SK-N-SH (cell line): ENCODE measurements at regions of chr5 and their contacts with region 1.

Region 1: GRCh38 chr5:147188200-147189108 is 46.4 kb upstream of the STK32A start:
- DNase-seq: peak; percentile 46
- H3K4me3 ChIP-seq: peak overlapping the region in 1 of 2 experiments; percentile 44; a peak in 2 of 4 replicates
- H3K27ac ChIP-seq: no peak overlapping the region
- H3K4me1 ChIP-seq: peaks cover 4 to 7% of the 10 kb centered on the region in 2 experiments; a peak in 2 of 4 replicates
- H3K27me3 ChIP-seq: no peaks in the 10 kb centered on the region
- CTCF ChIP-seq: peak; percentile 90
- EP300 ChIP-seq: 0 out of 4 replicates have a peak, but pooled peaks of 1 of the 2 experiments have one; percentile 7
- RAD21 ChIP-seq: peak; percentile 93

Region 2: GRCh38 chr5:146533260-146533857 is 655.1 kb before region 1 on chr5:
- CTCF ChIA-PET with region 1: interaction called, 145 read pairs
- POLR2A ChIA-PET with region 1: interaction called, 3 read pairs
- DNase-seq: peak; percentile 71
- H3K4me3 ChIP-seq: no peak overlapping the region; a peak in 1 of 4 replicates
- H3K27ac ChIP-seq: no peak overlapping the region
- H3K4me1 ChIP-seq: no peaks in the 10 kb centered on the region
- H3K27me3 ChIP-seq: no peaks in the 10 kb centered on the region
- CTCF ChIP-seq: peak; percentile 93
- EP300 ChIP-seq: no peak
- RAD21 ChIP-seq: peak; percentile 95

Region 3: GRCh38 chr5:146565764-146566367 is 622.6 kb before region 1 on chr5:
- CTCF ChIA-PET with region 1: interaction called, 20 read pairs
- POLR2A ChIA-PET with region 1: no interaction called
- DNase-seq: peak; percentile 75
- H3K4me3 ChIP-seq: peak overlapping the region in 1 of 2 experiments; percentile 23; a peak in 1 of 4 replicates
- H3K27ac ChIP-seq: no peak overlapping the region
- H3K4me1 ChIP-seq: peaks cover 2 to 18% of the 10 kb centered on the region in 2 experiments; a peak in 3 of 4 replicates
- H3K27me3 ChIP-seq: no peaks in the 10 kb centered on the region
- CTCF ChIP-seq: peak; percentile 77
- EP300 ChIP-seq: no peak
- RAD21 ChIP-seq: peak; percentile 92

Region 4: GRCh38 chr5:147098233-147098790 is 90.1 kb before region 1 on chr5:
- CTCF ChIA-PET with region 1: interaction called, 49 read pairs
- POLR2A ChIA-PET with region 1: interaction called, 3 read pairs
- DNase-seq: peak; percentile 53
- H3K4me3 ChIP-seq: peak overlapping the region; percentile 3 to 16; a peak in 1 of 4 replicates
- H3K27ac ChIP-seq: peak overlapping the region; percentile 66 to 95; a peak in 3 of 4 replicates
- H3K4me1 ChIP-seq: peaks cover 0 to 18% of the 10 kb centered on the region in 2 experiments; a peak in 2 of 4 replicates
- H3K27me3 ChIP-seq: no peaks in the 10 kb centered on the region
- CTCF ChIP-seq: peak; percentile 82
- EP300 ChIP-seq: peak; percentile 37 to 93; a peak in 3 of 4 replicates
- RAD21 ChIP-seq: peak; percentile 57

Region 5: GRCh38 chr5:147176422-147176821 is 12.0 kb before region 1 on chr5:
- CTCF ChIA-PET with region 1: interaction called, 26 read pairs
- POLR2A ChIA-PET with region 1: no interaction called
- DNase-seq: no peak
- H3K4me3 ChIP-seq: no peak overlapping the region
- H3K27ac ChIP-seq: peak overlapping the region in 1 of 2 experiments; percentile 82; a peak in 2 of 4 replicates
- H3K4me1 ChIP-seq: peaks cover 0 to 18% of the 10 kb centered on the region in 2 experiments; a peak in 1 of 4 replicates
- H3K27me3 ChIP-seq: no peaks in the 10 kb centered on the region
- CTCF ChIP-seq: no peak
- EP300 ChIP-seq: no peak
- RAD21 ChIP-seq: no peak

Region 6: GRCh38 chr5:147369742-147370374 is 181.4 kb after region 1 on chr5:
- CTCF ChIA-PET with region 1: interaction called, 21 read pairs
- POLR2A ChIA-PET with region 1: no interaction called
- DNase-seq: no peak
- H3K4me3 ChIP-seq: no peak overlapping the region
- H3K27ac ChIP-seq: peak overlapping the region in 1 of 2 experiments; percentile 34; a peak in 1 of 4 replicates
- H3K4me1 ChIP-seq: no peaks in the 10 kb centered on the region; a peak in 1 of 4 replicates
- H3K27me3 ChIP-seq: no peaks in the 10 kb centered on the region
- CTCF ChIP-seq: peak; percentile 94
- EP300 ChIP-seq: no peak
- RAD21 ChIP-seq: peak; percentile 84